Activated CD8-positive, alpha-beta T cell treated with anti-CD3 and anti-CD28 coated beads, Interleukin-2, amount 10 ng/mL, durations not matched to agents 7 days and 5 days (primary cell): ENCODE measurements at regions of chr15 and their contacts with region 1.

Region 1: DNA sequence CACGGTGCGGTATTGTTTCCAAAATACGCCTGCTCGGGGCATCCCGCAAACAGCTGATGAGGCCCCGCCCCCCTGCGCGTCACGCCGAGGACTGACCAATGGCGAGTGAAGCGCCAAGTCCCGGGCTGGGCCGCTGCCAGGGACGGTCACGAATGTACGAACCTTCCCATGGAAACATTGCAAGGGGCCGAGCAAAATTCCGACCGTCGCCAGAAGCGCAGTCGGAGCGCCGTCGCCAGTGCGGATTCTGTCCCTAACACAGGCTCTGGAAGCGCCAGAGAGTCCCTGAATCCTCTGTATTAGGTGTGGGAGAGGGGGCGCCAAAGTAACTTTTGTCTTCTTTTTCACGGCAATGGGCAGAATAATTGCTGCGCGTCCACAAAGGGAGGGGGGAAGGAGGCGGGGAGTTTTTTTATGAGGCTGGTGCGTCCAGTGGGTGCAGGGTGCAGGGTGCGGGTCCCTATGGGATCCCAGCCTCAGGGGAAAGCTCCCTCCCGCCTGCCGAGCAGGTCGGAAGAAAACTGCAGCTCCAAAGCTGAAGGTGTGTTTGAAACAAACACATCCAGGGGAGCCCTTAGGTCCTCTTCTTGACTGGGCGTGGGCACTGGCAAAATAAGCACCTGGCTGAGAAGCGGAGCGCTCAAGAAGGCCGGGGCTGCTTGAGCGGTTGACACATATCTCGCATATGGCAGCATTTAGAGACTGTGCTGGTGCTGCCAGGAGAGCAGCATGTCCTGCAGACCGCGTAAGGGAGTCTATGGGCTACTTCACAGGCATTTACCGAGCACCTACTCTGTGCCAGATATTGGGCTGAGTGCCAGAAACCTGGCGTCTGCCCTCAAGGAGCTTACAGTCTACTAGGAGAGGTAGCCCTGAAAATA is at the start of gene BMF:
- DNase-seq: peak; percentile 97
- ATAC-seq: peak; percentile 88
- H3K4me3 Mint-ChIP-seq: peak within 1 kb of the TSS; percentile 89
- H3K27ac Mint-ChIP-seq: peak within 1 kb of the TSS; percentile 78
- H3K4me1 Mint-ChIP-seq: peaks cover 58% of the 10 kb centered on the region
- H3K27me3 Mint-ChIP-seq: peaks cover 14% of the 10 kb centered on the region
- total RNA-seq, gene BMF: 2.2 to 4.0 TPM

Region 2: DNA sequence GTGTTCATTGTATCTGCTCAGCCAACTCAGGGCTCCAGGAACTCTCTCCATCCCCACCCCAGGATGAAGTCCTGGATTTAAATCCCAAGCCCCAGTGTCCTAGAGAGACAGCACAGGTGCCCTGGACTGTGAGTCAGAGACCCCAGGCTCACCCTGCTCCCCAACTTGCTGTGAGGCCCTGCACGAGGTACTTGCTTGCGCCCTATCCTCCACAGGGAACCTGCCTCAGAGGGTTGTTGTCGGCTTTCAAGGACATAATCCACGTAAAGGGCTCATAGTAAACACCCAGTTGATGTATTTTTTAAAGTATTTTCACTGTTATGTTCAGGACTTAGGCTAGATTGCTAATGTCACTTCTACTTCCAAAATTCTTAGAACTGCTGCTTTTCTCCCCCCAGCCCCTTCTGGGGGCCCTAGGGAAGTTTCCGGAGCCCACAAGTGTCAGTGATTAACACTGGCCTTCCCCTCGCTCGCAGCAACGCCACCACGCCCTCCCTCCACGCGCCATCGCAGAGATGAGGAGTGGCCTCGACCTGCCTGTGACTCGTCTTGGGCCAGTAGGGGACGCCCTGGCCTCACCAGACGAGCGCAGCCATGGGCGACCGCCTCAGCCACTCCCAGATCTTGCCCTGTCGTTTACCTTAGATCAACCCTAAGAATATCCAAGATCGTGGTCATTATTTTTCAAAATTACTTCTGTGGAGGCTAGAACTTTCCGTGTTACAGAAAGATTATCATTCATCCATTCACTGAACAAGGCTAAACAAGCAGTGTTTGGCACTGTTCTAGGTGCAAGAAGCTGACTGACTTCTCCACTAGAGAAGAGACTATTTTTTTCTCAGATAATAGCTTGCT is 64.2 kb before region 1 on chr15:
- CTCF ChIA-PET with region 1: interaction called, 366 read pairs
- POLR2A ChIA-PET with region 1: interaction called, 24 read pairs
- DNase-seq: peak; percentile 88
- ATAC-seq: peak; percentile 92
- H3K4me3 Mint-ChIP-seq: peak overlapping the region; percentile 9
- H3K27ac Mint-ChIP-seq: peak overlapping the region; percentile 53
- H3K4me1 Mint-ChIP-seq: peaks cover 76% of the 10 kb centered on the region
- H3K27me3 Mint-ChIP-seq: no peaks in the 10 kb centered on the region

Region 3: GRCh38 chr15:40064221-40064894 is 44.7 kb before region 1 on chr15:
- CTCF ChIA-PET with region 1: interaction called, 95 read pairs
- POLR2A ChIA-PET with region 1: no interaction called
- DNase-seq: no peak
- ATAC-seq: peak; percentile 40
- H3K4me3 Mint-ChIP-seq: no peak overlapping the region
- H3K27ac Mint-ChIP-seq: peak overlapping the region; percentile 60
- H3K4me1 Mint-ChIP-seq: peaks cover 18% of the 10 kb centered on the region
- H3K27me3 Mint-ChIP-seq: no peaks in the 10 kb centered on the region

Region 4: GRCh38 chr15:40075298-40076044 is 33.6 kb before region 1 on chr15:
- CTCF ChIA-PET with region 1: interaction called, 20 read pairs
- POLR2A ChIA-PET with region 1: interaction called, 6 read pairs
- DNase-seq: no peak
- ATAC-seq: no peak
- H3K4me3 Mint-ChIP-seq: no peak overlapping the region
- H3K27ac Mint-ChIP-seq: no peak overlapping the region
- H3K4me1 Mint-ChIP-seq: peaks cover 20% of the 10 kb centered on the region
- H3K27me3 Mint-ChIP-seq: peaks cover 10% of the 10 kb centered on the region

Region 5: DNA sequence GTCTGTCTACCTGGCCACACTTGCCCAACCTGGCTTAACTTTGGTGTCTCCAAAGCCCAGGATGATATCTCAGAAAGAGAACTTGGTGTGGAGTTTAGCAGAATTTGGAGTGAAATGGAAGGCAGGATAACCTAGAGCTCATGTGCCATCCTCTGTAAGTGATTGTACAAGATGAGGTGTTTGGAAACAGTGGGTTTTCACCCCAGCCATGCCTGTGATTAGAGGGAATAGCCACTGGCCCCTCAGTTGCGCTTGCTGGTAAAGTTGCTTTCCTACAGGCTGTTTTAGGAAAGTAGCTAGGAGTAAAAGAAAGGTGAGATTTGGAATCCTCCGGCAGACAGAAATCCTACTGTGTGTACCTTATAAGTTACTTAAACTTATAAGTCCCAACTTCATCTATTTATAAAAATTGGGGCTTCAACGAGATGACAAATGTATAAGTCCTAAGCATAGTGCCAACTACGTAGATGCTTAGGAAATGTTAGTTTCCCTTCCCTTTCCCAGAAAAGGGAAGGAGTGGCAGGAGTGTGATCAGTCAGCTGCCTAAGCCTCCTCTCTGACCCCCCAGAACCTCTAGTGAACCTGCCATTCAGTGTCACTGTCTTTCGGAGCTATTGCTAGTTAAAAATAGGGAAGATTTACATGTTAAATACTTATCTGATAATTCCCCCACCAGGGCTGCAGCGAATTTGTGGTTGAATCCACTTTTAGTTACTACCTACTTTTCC is 13.0 kb after region 1 on chr15:
- CTCF ChIA-PET with region 1: interaction called, 387 read pairs
- POLR2A ChIA-PET with region 1: interaction called, 4 read pairs
- DNase-seq: no peak
- ATAC-seq: no peak
- H3K4me3 Mint-ChIP-seq: no peak overlapping the region
- H3K27ac Mint-ChIP-seq: no peak overlapping the region
- H3K4me1 Mint-ChIP-seq: peaks cover 2% of the 10 kb centered on the region
- H3K27me3 Mint-ChIP-seq: peaks cover 8% of the 10 kb centered on the region

Region 6: GRCh38 chr15:40372981-40373380 is 263.9 kb after region 1 on chr15:
- CTCF ChIA-PET with region 1: no interaction called
- POLR2A ChIA-PET with region 1: no interaction called
- DNase-seq: no peak
- ATAC-seq: no peak
- H3K4me3 Mint-ChIP-seq: no peak overlapping the region
- H3K27ac Mint-ChIP-seq: no peak overlapping the region
- H3K4me1 Mint-ChIP-seq: peaks cover 8% of the 10 kb centered on the region
- H3K27me3 Mint-ChIP-seq: peaks cover 15% of the 10 kb centered on the region

Region 7: GRCh38 chr15:40454904-40455391 is 345.9 kb after region 1 on chr15:
- CTCF ChIA-PET with region 1: no interaction called
- POLR2A ChIA-PET with region 1: no interaction called
- DNase-seq: no peak
- ATAC-seq: no peak
- H3K4me3 Mint-ChIP-seq: peak overlapping the region; percentile 74
- H3K27ac Mint-ChIP-seq: peak overlapping the region; percentile 96
- H3K4me1 Mint-ChIP-seq: peaks cover 73% of the 10 kb centered on the region
- H3K27me3 Mint-ChIP-seq: no peaks in the 10 kb centered on the region